ENCODE measurements at regions of chr9 and their contacts with region 1.

Region 1: GRCh38 chr9:104868687-104869404 is 59.1 kb downstream of the ABCA1 start:
- DNase-seq: peak; percentile 78
- ATAC-seq: peak; percentile 90

Region 2: GRCh38 chr9:104882086-104882485 is 13.2 kb after region 1 on chr9:
- intact Hi-C with region 1: no loop called
- DNase-seq: no peak
- ATAC-seq: no peak

Region 3: DNA sequence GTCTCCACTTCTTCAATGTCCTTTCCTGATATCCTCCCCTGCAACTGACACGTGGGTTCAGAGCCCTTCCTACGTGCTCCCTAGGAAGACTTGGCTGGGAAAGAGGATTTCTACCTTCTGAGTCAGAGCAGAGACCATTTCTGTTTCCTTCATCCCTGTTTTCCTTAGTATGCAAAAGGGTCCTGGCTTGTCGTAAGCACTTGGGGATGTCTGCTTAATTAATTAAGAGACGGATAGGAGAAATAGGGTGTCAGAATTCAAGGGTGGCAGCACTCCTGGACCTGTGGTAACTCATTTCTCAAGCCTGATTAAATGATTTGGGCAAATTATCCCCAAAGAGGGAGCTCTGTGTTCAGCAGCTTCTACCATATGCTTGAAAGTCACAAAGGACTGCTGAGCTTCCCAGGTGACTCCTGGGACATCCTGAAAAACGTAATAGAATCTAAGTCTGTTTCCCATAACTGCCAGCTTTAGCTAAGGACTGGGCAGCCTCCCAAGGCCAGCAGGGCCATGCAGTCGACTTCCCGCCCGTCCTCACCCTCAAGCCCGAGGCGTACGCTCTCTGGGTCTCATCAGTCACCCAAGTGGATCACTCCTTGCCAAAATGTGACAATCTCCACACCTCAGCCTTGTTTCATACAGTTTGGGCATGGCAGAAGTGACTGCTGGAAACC is 38.6 kb after region 1 on chr9:
- intact Hi-C with region 1: loop called (anchors 2 kb)
- DNase-seq: no peak
- ATAC-seq: peak; percentile 29

Region 4: GRCh38 chr9:105007143-105007542 is 138.3 kb after region 1 on chr9:
- intact Hi-C with region 1: no loop called
- DNase-seq: no peak
- ATAC-seq: peak; percentile 60

Region 5: GRCh38 chr9:105044483-105044882 is 175.6 kb after region 1 on chr9:
- intact Hi-C with region 1: loop called (anchors 5 kb)
- DNase-seq: no peak
- ATAC-seq: peak; percentile 85